ENCODE measurements at regions of chr5 and their contacts with region 1.

Region 1: DNA sequence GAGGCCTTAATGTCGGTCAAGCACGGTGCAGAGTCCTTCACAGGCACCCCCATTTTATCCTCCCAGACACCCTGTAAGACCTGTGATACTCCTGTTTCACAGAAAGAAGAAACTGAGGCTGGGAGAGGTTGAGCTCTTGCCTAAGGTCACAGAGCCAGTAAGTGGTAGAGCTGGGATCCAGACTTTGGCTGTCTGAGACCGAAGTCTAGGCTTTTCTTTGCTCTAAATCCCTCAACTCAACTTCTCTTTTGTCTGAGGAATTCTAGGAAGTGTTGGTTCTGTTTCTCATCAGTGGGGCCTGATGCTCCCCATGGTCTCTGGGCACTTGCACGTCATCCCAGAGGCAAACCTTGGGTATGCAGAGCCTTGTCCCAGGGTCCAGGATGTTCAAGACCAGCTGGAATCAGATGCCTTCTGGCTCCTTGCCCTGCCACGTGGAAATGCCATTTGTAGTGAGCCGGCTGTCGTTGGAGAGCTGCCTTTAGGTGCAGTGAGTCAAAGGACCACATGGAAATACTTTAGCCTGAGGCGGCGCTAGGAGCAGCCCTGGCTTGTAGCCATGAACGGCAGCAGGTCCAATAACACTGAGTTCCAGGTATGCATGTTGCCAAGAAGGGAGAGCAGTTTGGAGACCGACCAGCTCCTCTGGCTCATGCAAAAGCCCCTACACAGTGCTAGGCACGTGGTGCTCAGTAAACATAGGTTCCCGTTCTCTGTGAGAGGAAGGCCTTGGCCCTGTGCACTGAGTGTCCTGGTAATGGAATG is 9.2 kb downstream of the DCANP1 start:
- DNase-seq: peak; percentile 34
- ATAC-seq: peak; percentile 32
- H3K4me3 ChIP-seq: no peak overlapping the region
- H3K27ac ChIP-seq: no peak overlapping the region
- H3K4me1 ChIP-seq: peaks cover 51% of the 10 kb centered on the region
- H3K27me3 ChIP-seq: peaks cover 3 to 33% of the 10 kb centered on the region in 2 experiments; a peak in 4 of 5 replicates
- CTCF ChIP-seq: no peak
- EP300 ChIP-seq: no peak
- POLR2A ChIP-seq: no peak
- RAD21 ChIP-seq: no peak

Region 2: DNA sequence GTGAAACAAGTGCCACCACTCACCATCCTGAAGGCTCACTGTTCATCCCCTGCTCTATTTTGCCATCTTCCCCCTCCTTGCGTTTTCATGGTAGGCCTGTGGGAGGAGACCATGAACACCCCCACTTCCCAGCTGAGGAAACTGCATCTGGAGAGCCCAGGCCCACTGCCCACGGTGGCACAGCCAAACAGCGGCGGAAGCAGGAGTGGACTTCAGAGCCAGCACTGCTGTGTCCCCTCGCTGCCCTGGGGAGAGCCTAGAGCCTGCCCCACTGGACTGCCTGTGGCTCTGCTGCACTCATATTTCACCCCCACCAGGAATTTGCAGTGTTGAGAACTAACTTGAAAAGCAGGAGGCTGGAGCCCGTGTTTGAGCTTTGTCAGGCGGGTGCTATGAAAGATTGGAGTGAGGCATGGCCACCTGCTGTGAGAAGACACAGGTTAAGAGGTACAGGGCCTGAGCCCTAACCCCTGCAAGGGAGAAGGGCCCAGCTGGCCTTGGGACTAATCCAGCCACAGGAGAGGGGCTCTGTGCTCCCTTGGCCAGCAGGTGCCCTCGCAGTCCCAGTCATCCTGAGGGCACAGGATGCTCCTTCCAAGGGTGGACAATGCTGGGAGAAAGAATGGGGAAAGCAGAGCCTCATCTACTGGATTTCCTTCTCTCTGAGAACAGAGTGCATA is 117.9 kb before region 1 on chr5:
- CTCF ChIA-PET with region 1: no interaction called
- POLR2A ChIA-PET with region 1: no interaction called
- in situ Hi-C with region 1: no loop called
- intact Hi-C with region 1: loop called (anchors 10 kb)
- DNase-seq: no peak
- ATAC-seq: peak; percentile 54
- H3K4me3 ChIP-seq: no peak overlapping the region
- H3K27ac ChIP-seq: no peak overlapping the region
- H3K4me1 ChIP-seq: peaks cover 47% of the 10 kb centered on the region
- H3K27me3 ChIP-seq: no peaks in the 10 kb centered on the region
- CTCF ChIP-seq: peak; percentile 74
- EP300 ChIP-seq: no peak
- POLR2A ChIP-seq: no peak
- RAD21 ChIP-seq: no peak